Activated T-helper 1 cell treated with anti-CD3 and anti-CD28 coated beads, Interleukin-12 subunit alpha, Interleukin-12 subunit beta, Interleukin-2, Interleukin-4 antibody, amounts not matched to agents 30 ng/mL and 10 ng/mL and 1 ng/mL, durations not matched to agents 14 hours and 24 hours and 36 hours (primary cell): ENCODE measurements at regions of chr7 and their contacts with region 1.

Region 1: GRCh38 chr7:48299580-48300169 is 128.4 kb downstream of the ABCA13 start:
- DNase-seq: peak; percentile 20
- H3K4me3 Mint-ChIP-seq: no peak overlapping the region
- H3K27ac Mint-ChIP-seq: no peak overlapping the region
- H3K4me1 Mint-ChIP-seq: peaks cover 6% of the 10 kb centered on the region
- H3K27me3 Mint-ChIP-seq: peaks cover 5% of the 10 kb centered on the region

Region 2: DNA sequence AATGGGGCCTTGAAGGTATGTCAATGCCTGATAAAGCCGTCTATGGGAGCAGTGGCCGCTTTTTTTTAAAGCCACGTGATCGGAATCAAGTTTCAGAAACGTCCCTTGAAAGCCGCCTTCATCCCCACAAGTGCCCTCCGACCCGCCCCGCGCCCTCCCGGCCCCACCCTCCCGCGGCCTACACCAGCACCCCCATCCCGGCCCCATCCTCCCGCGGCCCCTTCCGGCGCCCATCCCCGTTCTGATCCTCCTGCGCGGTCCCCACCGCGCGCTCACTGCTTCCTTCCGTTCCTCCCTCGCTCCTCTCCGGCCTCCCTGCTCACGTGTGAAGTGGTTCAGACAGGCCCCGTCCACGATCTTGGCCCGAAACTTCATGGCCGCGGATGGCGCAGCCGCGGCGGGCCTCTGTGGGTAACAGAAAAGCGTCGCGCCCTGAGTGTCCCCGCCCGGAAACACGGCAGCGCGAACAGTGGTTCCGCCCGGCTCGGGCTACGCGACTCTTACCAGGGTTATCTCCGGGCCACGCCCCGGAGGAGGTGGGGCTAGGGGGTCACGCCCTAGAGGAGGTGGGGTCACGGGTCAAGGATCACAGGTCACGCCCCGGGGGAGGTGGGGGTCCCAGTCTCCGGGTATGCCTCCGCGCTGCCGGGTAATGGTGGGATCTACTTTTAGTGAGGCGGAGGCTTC is 320.4 kb before region 1 on chr7 and contains the start of gene HUS1:
- intact Hi-C with region 1: loop called (anchors 1 kb)
- DNase-seq: peak; percentile 88
- H3K4me3 Mint-ChIP-seq: peak within 1 kb of the TSS; percentile 90
- H3K27ac Mint-ChIP-seq: peak within 1 kb of the TSS; percentile 96
- H3K4me1 Mint-ChIP-seq: peaks cover 24% of the 10 kb centered on the region
- H3K27me3 Mint-ChIP-seq: peaks cover 5% of the 10 kb centered on the region
- total RNA-seq, gene HUS1: 34.4 and 36.4 TPM in 2 replicates

Region 3: DNA sequence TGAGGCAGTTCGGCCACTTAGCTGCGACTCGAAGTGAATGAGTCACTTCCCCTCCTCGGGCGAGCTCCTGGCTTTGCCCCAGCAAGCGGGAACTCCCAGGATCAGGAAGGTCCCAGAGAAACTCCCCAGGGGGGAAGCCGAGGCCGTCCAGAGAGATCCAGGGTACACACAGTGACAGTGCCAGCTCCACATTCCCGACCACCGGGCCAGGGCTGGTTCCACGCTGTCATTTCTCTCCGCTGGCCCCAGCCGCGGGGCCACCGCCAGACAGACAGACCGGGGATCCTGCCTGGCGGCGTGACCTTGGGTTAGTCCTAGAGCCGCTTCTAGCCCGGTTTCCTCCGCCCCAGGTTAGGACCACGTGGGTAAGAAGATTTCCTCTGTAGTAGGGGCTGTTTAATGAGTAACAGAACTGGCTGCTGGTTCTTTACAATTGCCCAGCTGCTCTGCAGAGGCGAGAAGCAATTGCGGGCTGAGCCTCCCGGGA is 211.1 kb before region 1 on chr7:
- intact Hi-C with region 1: loop called (anchors 2 kb)
- DNase-seq: peak; percentile 87
- H3K4me3 Mint-ChIP-seq: peak overlapping the region; percentile 87
- H3K27ac Mint-ChIP-seq: peak overlapping the region; percentile 96
- H3K4me1 Mint-ChIP-seq: peaks cover 82% of the 10 kb centered on the region
- H3K27me3 Mint-ChIP-seq: no peaks in the 10 kb centered on the region

Region 4: DNA sequence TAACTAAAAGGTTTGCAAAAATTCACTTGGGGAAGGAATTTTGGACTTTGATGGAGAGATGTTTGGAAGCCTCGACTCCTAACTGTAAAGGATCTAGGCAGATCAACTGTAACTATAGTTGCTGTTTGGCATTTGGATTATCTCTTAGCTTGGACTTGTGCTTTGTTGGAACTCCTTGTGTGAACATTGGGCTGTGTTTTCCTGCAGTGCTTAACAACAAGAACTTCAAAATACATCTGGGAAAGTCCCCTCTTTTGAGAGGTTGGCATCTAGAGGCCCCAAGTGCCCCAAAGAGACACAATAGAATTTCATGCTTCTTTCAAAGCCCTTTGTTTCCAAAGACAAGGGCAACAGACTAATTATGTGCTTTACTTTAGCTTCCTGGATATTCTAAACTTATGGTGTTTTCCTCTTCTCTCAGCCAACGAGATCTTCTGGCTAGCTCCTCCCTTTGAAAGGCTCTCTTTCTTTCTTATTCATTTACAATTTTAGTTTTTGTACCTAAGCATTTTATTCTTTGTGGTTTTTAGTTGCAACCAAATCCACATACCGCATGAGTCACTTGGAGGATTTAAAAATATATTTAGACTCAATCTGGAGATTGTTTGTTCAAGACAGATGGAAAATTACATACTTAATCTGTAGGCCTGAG is 116.8 kb before region 1 on chr7:
- intact Hi-C with region 1: loop called (anchors 5 kb)
- DNase-seq: no peak
- H3K4me3 Mint-ChIP-seq: no peak overlapping the region
- H3K27ac Mint-ChIP-seq: no peak overlapping the region
- H3K4me1 Mint-ChIP-seq: peaks cover 14% of the 10 kb centered on the region
- H3K27me3 Mint-ChIP-seq: peaks cover 7% of the 10 kb centered on the region

Region 5: GRCh38 chr7:48279420-48279819 is 20.3 kb before region 1 on chr7:
- intact Hi-C with region 1: loop called (anchors 2 kb)
- DNase-seq: no peak
- H3K4me3 Mint-ChIP-seq: no peak overlapping the region
- H3K27ac Mint-ChIP-seq: no peak overlapping the region
- H3K4me1 Mint-ChIP-seq: no peaks in the 10 kb centered on the region
- H3K27me3 Mint-ChIP-seq: peaks cover 5% of the 10 kb centered on the region

Region 6: GRCh38 chr7:49852619-49853462 is 1553.2 kb after region 1 on chr7:
- intact Hi-C with region 1: loop called (anchors 2 kb)
- DNase-seq: no peak
- H3K4me3 Mint-ChIP-seq: no peak overlapping the region
- H3K27ac Mint-ChIP-seq: no peak overlapping the region
- H3K4me1 Mint-ChIP-seq: no peaks in the 10 kb centered on the region
- H3K27me3 Mint-ChIP-seq: no peaks in the 10 kb centered on the region